ENCODE measurements at regions of chr19 and their contacts with region 1.

Region 1: DNA sequence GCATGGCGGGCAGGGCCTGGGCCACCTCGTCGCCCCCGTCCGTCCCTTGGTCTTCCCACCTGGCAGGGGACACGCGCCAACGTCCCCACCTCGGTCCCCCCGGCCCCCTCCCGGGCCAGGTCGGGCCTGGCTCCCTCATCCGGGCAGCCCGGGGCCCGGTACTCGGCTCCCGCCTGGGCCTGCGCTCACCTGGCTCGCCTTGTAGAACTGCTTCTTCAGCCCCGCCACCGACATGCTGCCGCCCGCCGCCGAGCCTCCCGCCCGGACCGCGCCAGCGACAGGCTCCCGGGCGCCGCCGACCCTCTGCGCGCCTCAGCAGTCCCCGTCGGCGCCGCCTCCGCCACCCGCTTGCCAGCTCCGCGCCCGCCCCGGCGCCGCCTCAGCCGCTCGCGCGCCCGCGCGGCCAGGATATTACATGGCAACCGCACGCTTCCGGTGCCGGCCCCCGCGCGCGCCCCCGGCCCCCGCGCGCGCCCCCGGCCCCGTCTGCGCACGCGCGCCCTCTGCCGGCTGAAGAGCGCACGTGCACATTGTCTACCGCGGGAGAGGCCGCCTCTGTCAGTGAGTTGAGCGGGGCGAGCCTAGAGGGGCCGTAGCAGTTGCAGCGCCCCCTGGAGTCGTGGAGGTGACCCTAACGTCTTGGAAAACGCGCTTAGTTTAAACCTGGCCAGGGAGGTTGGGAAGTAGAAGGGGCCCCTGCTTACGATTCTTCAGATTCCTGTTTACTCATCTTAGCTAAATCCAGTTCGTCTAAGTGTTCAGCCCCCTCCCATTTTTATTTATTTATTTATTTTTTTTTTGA is at the start of gene SH3GL1:
- DNase-seq: peak; percentile 45
- ATAC-seq: peak; percentile 85
- H3K4me3 ChIP-seq: peak within 1 kb of the TSS; percentile 80 to 92
- H3K27ac ChIP-seq: peak within 1 kb of the TSS; percentile 89
- H3K4me1 ChIP-seq: peaks cover 10% of the 10 kb centered on the region
- H3K27me3 ChIP-seq: no peaks in the 10 kb centered on the region
- CTCF ChIP-seq: peak; percentile 99
- total RNA-seq, gene SH3GL1: 57.1 TPM

Region 2: DNA sequence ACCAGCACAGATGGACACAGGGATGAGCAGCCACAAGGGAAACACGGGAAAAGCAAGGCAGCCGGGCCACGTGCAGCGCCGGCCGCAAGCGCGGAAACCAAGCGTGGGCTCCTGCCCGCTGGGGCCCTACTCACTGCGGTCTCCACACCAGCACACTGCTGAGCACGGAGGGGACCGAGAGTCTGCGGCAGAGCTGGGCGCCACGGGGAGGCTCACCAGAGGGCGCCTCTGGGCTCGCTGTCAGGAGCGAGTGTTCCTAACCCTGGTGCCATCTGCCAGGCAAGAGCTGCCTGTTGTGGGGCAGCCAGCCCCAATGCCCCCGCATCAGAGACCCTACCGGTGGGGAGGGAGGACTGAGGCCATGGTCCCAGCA is 30.5 kb before region 1 on chr19:
- CTCF ChIA-PET with region 1: no interaction called
- POLR2A ChIA-PET with region 1: interaction called, 3 read pairs
- in situ Hi-C with region 1: no loop called
- intact Hi-C with region 1: loop called (anchors 5 kb)
- DNase-seq: no peak
- ATAC-seq: peak; percentile 65
- H3K4me3 ChIP-seq: peak overlapping the region in 1 of 2 experiments; percentile 14; a peak in 1 of 4 replicates
- H3K27ac ChIP-seq: peak overlapping the region; percentile 92
- H3K4me1 ChIP-seq: peaks cover 67% of the 10 kb centered on the region
- H3K27me3 ChIP-seq: no peaks in the 10 kb centered on the region
- CTCF ChIP-seq: peak; percentile 81

Region 3: GRCh38 chr19:4495471-4495870 is 95.1 kb after region 1 on chr19:
- CTCF ChIA-PET with region 1: no interaction called
- POLR2A ChIA-PET with region 1: no interaction called
- in situ Hi-C with region 1: no loop called
- intact Hi-C with region 1: no loop called
- DNase-seq: no peak
- ATAC-seq: peak; percentile 70
- H3K4me3 ChIP-seq: no peak overlapping the region
- H3K27ac ChIP-seq: no peak overlapping the region
- H3K4me1 ChIP-seq: no peaks in the 10 kb centered on the region
- H3K27me3 ChIP-seq: no peaks in the 10 kb centered on the region
- CTCF ChIP-seq: no peak; the same call in 1 of the 2 replicates

Measured in Panc1 (cell line).